ENCODE measurements at regions of chr5 and their contacts with region 1.

Region 1: DNA sequence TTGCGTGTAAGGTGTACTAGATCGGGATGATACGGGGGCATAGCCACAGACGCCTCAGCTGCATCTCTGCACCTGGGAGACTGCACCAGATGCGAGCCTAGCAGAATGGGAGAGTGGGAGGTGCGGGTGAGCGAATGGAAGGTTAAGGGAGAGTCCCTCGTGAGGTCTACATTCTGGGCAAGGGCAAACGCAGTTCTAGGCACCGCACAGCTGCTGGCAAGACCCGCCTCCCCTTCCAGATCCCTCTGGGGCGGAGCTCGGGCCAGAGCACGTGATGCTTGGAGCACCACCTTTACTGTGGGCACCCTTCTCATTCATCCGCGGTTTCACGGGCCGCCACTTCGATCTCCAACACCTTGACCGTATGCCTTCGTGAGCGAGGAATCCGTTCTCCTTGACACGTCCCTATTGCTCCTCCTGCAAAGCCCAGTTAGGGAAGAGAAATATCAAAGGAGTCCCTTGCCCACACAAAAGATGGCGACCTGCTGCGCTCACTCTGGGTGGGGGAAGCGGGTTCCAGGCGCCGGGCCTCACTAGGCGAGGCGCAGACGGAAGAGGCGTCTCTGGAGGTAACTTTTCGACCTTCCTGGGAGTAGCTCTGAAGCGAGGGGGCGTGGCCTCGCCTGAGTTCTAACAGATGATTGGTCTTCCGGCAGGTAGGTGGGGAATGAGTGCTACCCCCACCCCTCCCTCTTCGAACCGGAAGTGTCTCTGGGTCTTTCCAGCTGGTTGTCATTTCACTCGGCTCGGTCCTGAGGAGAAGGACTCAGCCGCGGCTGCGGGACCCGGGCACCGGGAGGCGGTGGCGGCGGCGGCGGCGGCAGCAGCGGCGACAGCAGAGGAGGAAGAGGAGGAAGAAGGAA is at the start of gene CPEB4:
- DNase-seq: peak; percentile 98 to 100 (median 98)
- ATAC-seq: peak; percentile 83
- H3K4me3 ChIP-seq: peak within 1 kb of the TSS; percentile 72
- H3K27ac ChIP-seq: peak within 1 kb of the TSS; percentile 100
- H3K4me1 ChIP-seq: peaks cover 28 to 47% of the 10 kb centered on the region in 2 experiments
- H3K27me3 ChIP-seq: no peaks in the 10 kb centered on the region
- CTCF ChIP-seq: no peak
- EP300 ChIP-seq: no peak
- POLR2A ChIP-seq: peak; percentile 92
- RAD21 ChIP-seq: peak in 1 of 2 experiments; percentile 27; a peak in 1 of 4 replicates
- polyA plus RNA-seq, gene CPEB4: 7.4 to 10.2 TPM

Region 2: GRCh38 chr5:173331956-173332479 is 555.8 kb before region 1 on chr5:
- CTCF ChIA-PET with region 1: no interaction called
- POLR2A ChIA-PET with region 1: no interaction called
- in situ Hi-C with region 1: no loop called
- intact Hi-C with region 1: loop called (anchors 10 kb)
- DNase-seq: peak; percentile 93 to 95 (median 94)
- ATAC-seq: peak; percentile 78
- H3K4me3 ChIP-seq: no peak overlapping the region
- H3K27ac ChIP-seq: no peak overlapping the region
- H3K4me1 ChIP-seq: peaks cover 4 to 25% of the 10 kb centered on the region in 2 experiments; a peak in 3 of 5 replicates
- H3K27me3 ChIP-seq: 0 out of 5 replicates have a peak, but pooled peaks cover 0 to 5% of the 10 kb centered on the region in 2 experiments
- CTCF ChIP-seq: peak; percentile 95 to 98 (median 97)
- EP300 ChIP-seq: no peak
- POLR2A ChIP-seq: no peak
- RAD21 ChIP-seq: peak; percentile 99

Region 3: GRCh38 chr5:173707392-173707791 is 180.4 kb before region 1 on chr5:
- CTCF ChIA-PET with region 1: no interaction called
- POLR2A ChIA-PET with region 1: no interaction called
- in situ Hi-C with region 1: no loop called
- intact Hi-C with region 1: loop called (anchors 10 kb)
- DNase-seq: no peak
- ATAC-seq: no peak
- H3K4me3 ChIP-seq: no peak overlapping the region
- H3K27ac ChIP-seq: no peak overlapping the region
- H3K4me1 ChIP-seq: peaks cover 13 to 24% of the 10 kb centered on the region in 2 experiments; a peak in 4 of 5 replicates
- H3K27me3 ChIP-seq: no peaks in the 10 kb centered on the region
- CTCF ChIP-seq: no peak
- EP300 ChIP-seq: no peak
- POLR2A ChIP-seq: no peak
- RAD21 ChIP-seq: no peak

Region 4: DNA sequence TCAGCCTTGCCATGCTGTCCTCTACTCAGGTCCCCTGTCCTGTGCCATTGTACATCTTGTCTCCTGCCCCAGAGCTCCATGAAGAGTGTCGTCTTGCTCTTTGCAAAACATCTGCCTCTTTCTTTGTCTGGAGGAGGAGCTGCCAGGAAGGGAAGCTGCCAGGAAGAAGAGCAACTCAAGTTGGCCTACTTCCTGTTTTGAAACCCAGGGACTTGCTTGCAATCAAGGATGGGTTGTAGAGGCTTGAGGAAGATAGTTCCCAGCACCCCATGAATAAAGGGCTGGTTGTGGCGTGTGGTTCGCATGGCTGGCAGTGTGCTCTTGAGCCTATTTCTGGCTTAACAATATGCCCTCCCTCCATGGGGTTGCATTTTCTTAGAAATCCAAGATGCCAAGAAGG is 52.7 kb before region 1 on chr5:
- CTCF ChIA-PET with region 1: no interaction called
- POLR2A ChIA-PET with region 1: interaction called, 8 read pairs
- in situ Hi-C with region 1: no loop called
- intact Hi-C with region 1: loop called (anchors 1 kb)
- DNase-seq: no peak
- ATAC-seq: no peak
- H3K4me3 ChIP-seq: no peak overlapping the region
- H3K27ac ChIP-seq: no peak overlapping the region
- H3K4me1 ChIP-seq: peaks cover 20 to 65% of the 10 kb centered on the region in 2 experiments
- H3K27me3 ChIP-seq: no peaks in the 10 kb centered on the region
- CTCF ChIP-seq: no peak
- EP300 ChIP-seq: no peak
- POLR2A ChIP-seq: no peak
- RAD21 ChIP-seq: no peak

Region 5: GRCh38 chr5:173866243-173866857 is 21.5 kb before region 1 on chr5:
- CTCF ChIA-PET with region 1: no interaction called
- POLR2A ChIA-PET with region 1: interaction called, 9 read pairs
- in situ Hi-C with region 1: no loop called
- intact Hi-C with region 1: loop called (anchors 2 kb)
- DNase-seq: peak in 2 of 4 experiments; percentile 63 to 65
- ATAC-seq: peak; percentile 78
- H3K4me3 ChIP-seq: peak overlapping the region; percentile 35
- H3K27ac ChIP-seq: peak overlapping the region; percentile 82
- H3K4me1 ChIP-seq: peaks cover 32 to 64% of the 10 kb centered on the region in 2 experiments
- H3K27me3 ChIP-seq: no peaks in the 10 kb centered on the region
- CTCF ChIP-seq: no peak
- EP300 ChIP-seq: no peak
- POLR2A ChIP-seq: no peak
- RAD21 ChIP-seq: no peak

Region 6: GRCh38 chr5:173917788-173918786 is 30.2 kb after region 1 on chr5:
- CTCF ChIA-PET with region 1: no interaction called
- POLR2A ChIA-PET with region 1: interaction called, 4 read pairs
- in situ Hi-C with region 1: no loop called
- intact Hi-C with region 1: loop called (anchors 2 kb)
- DNase-seq: peak; percentile 52 to 85 (median 66)
- ATAC-seq: peak; percentile 90
- H3K4me3 ChIP-seq: peak overlapping the region; percentile 44
- H3K27ac ChIP-seq: peak overlapping the region; percentile 94
- H3K4me1 ChIP-seq: peaks cover 0 to 28% of the 10 kb centered on the region in 2 experiments; a peak in 3 of 5 replicates
- H3K27me3 ChIP-seq: no peaks in the 10 kb centered on the region
- CTCF ChIP-seq: peak in 1 of 3 experiments; percentile 12; a peak in 1 of 6 replicates
- EP300 ChIP-seq: no peak
- POLR2A ChIP-seq: peak; percentile 84
- RAD21 ChIP-seq: peak in 1 of 2 experiments; percentile 24; a peak in 1 of 4 replicates

Region 7: GRCh38 chr5:173972925-173973615 is 85.2 kb after region 1 on chr5:
- CTCF ChIA-PET with region 1: no interaction called
- POLR2A ChIA-PET with region 1: no interaction called
- in situ Hi-C with region 1: no loop called
- intact Hi-C with region 1: loop called (anchors 2 kb)
- DNase-seq: peak; percentile 81 to 89 (median 82)
- ATAC-seq: peak; percentile 82
- H3K4me3 ChIP-seq: peak overlapping the region; percentile 36
- H3K27ac ChIP-seq: no peak overlapping the region; the same call in 1 of the 3 replicates
- H3K4me1 ChIP-seq: peaks cover 28 to 39% of the 10 kb centered on the region in 2 experiments
- H3K27me3 ChIP-seq: peaks cover 0 to under 1% of the 10 kb centered on the region in 2 experiments; a peak in 1 of 5 replicates
- CTCF ChIP-seq: peak; percentile 81 to 91 (median 88)
- EP300 ChIP-seq: no peak
- POLR2A ChIP-seq: no peak
- RAD21 ChIP-seq: peak; percentile 79 to 93